ENCODE measurements at regions of chr3 and their contacts with region 1.

Region 1: DNA sequence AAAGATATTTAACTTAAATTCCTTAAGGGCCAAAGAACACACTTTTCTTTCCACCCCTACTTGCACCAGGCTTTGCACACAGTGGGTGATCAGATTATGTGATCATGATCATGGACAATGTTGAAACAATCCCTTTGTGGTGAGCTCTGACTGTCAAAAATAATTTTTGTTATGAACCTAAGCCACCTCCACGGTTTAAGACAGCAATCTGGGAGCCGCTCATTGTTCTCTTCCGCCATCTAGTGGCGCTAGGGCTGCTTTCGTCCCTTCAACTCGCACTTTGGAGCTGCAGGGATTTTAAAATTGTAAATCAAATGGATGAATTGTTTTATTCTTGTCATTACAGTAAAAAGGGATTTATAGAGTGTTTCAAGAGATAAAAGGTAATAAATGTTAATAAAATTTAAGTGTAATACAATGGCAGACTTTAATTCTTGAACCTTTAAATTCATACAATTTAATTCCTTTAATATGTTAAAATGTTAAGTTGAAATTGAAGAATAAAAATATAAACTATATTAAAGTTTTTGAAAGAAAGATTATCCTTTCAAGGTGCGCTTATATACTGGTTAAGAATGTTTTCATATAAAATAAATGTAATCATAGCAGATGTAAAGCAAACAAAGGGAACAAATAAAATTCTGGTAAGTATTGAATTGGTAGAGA is 45.3 kb upstream of the ARL6 start:
- DNase-seq: peak; percentile 27
- ATAC-seq: peak; percentile 77
- H3K4me3 Mint-ChIP-seq: no peak overlapping the region
- H3K27ac Mint-ChIP-seq: no peak overlapping the region
- H3K4me1 Mint-ChIP-seq: no peaks in the 10 kb centered on the region
- H3K27me3 Mint-ChIP-seq: no peaks in the 10 kb centered on the region
- CTCF ChIP-seq: peak; percentile 17

Region 2: GRCh38 chr3:96863129-96863740 is 856.1 kb before region 1 on chr3:
- CTCF ChIA-PET with region 1: no interaction called
- POLR2A ChIA-PET with region 1: no interaction called
- intact Hi-C with region 1: loop called (anchors 2 kb)
- DNase-seq: no peak
- ATAC-seq: no peak
- H3K4me3 Mint-ChIP-seq: no peak overlapping the region
- H3K27ac Mint-ChIP-seq: no peak overlapping the region
- H3K4me1 Mint-ChIP-seq: no peaks in the 10 kb centered on the region
- H3K27me3 Mint-ChIP-seq: no peaks in the 10 kb centered on the region
- CTCF ChIP-seq: no peak

Region 3: GRCh38 chr3:97778152-97778551 is 58.9 kb after region 1 on chr3:
- CTCF ChIA-PET with region 1: no interaction called
- POLR2A ChIA-PET with region 1: no interaction called
- intact Hi-C with region 1: no loop called
- DNase-seq: no peak
- ATAC-seq: no peak
- H3K4me3 Mint-ChIP-seq: no peak overlapping the region
- H3K27ac Mint-ChIP-seq: no peak overlapping the region
- H3K4me1 Mint-ChIP-seq: no peaks in the 10 kb centered on the region
- H3K27me3 Mint-ChIP-seq: no peaks in the 10 kb centered on the region
- CTCF ChIP-seq: no peak

Region 4: GRCh38 chr3:98022978-98023820 is 303.9 kb after region 1 on chr3:
- CTCF ChIA-PET with region 1: interaction called, 5 read pairs
- POLR2A ChIA-PET with region 1: no interaction called
- intact Hi-C with region 1: loop called (anchors 2 kb)
- DNase-seq: peak; percentile 79
- ATAC-seq: peak; percentile 66
- H3K4me3 Mint-ChIP-seq: no peak overlapping the region
- H3K27ac Mint-ChIP-seq: no peak overlapping the region
- H3K4me1 Mint-ChIP-seq: no peaks in the 10 kb centered on the region
- H3K27me3 Mint-ChIP-seq: peaks cover 5% of the 10 kb centered on the region
- CTCF ChIP-seq: peak; percentile 85

Measured in activated B cell treated with CpG ODN at 0.5 μM for 24 hours (primary cell).